Activated CD4-positive, alpha-beta memory T cell treated with anti-CD3 and anti-CD28 coated beads for 36 hours (primary cell): ENCODE measurements at regions of chr7 and their contacts with region 1.

Region 1: GRCh38 chr7:27160546-27161213 is 4.2 kb upstream of the HOXA7 start:
- DNase-seq: peak; percentile 87
- H3K4me3 Mint-ChIP-seq: peak overlapping the region; percentile 61
- H3K27ac Mint-ChIP-seq: no peak overlapping the region
- H3K4me1 Mint-ChIP-seq: peaks cover 28% of the 10 kb centered on the region
- H3K27me3 Mint-ChIP-seq: peaks cover 81% of the 10 kb centered on the region

Region 2: GRCh38 chr7:25862260-25863037 is 1298.2 kb before region 1 on chr7:
- CTCF ChIA-PET with region 1: no interaction called
- POLR2A ChIA-PET with region 1: no interaction called
- intact Hi-C with region 1: loop called (anchors 5 kb)
- DNase-seq: peak; percentile 98
- H3K4me3 Mint-ChIP-seq: peak overlapping the region; percentile 65
- H3K27ac Mint-ChIP-seq: peak overlapping the region; percentile 60
- H3K4me1 Mint-ChIP-seq: peaks cover 22% of the 10 kb centered on the region
- H3K27me3 Mint-ChIP-seq: peaks cover 69% of the 10 kb centered on the region

Region 3: GRCh38 chr7:26376175-26376917 is 784.3 kb before region 1 on chr7:
- CTCF ChIA-PET with region 1: interaction called, 12 read pairs
- POLR2A ChIA-PET with region 1: no interaction called
- intact Hi-C with region 1: no loop called
- DNase-seq: peak; percentile 56
- H3K4me3 Mint-ChIP-seq: peak overlapping the region; percentile 73
- H3K27ac Mint-ChIP-seq: no peak overlapping the region
- H3K4me1 Mint-ChIP-seq: no peaks in the 10 kb centered on the region
- H3K27me3 Mint-ChIP-seq: peaks cover 27% of the 10 kb centered on the region

Region 4: DNA sequence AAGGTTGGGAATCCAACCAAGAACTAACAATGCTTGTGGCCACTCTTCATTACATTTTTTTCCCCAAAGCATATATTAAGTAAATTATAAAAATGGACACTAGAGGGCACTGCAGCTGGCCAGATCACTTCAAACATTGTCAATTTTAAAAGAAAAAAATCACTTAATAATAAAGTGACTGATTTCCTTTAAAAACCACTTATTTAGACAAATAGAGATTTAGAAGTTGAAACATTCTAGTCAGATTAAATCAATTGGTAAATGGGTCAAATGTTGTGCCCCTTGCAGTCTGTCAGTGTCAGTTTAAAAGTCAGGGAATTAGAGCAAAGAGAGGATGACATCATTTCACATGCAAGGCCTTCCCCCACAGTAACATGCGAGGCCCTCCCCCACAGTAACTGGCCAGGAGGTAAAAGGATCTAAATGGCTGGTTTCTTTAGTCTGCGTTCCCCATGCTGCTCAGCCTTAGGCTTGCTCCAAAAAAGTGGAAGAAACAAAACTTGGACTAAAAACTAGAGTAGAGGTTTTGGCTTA is 474.2 kb before region 1 on chr7:
- CTCF ChIA-PET with region 1: interaction called, 4 read pairs
- POLR2A ChIA-PET with region 1: no interaction called
- intact Hi-C with region 1: loop called (anchors 1 kb)
- DNase-seq: no peak
- H3K4me3 Mint-ChIP-seq: no peak overlapping the region
- H3K27ac Mint-ChIP-seq: no peak overlapping the region
- H3K4me1 Mint-ChIP-seq: no peaks in the 10 kb centered on the region
- H3K27me3 Mint-ChIP-seq: peaks cover 13% of the 10 kb centered on the region

Region 5: GRCh38 chr7:27095897-27096767 is 64.5 kb before region 1 on chr7 and contains the start of gene HOXA1:
- CTCF ChIA-PET with region 1: interaction called, 10 read pairs
- POLR2A ChIA-PET with region 1: no interaction called
- intact Hi-C with region 1: loop called (anchors 5 kb)
- DNase-seq: peak; percentile 85
- H3K4me3 Mint-ChIP-seq: peak within 1 kb of the TSS; percentile 66
- H3K27ac Mint-ChIP-seq: no peak within 1 kb of the TSS
- H3K4me1 Mint-ChIP-seq: peaks cover 15% of the 10 kb centered on the region
- H3K27me3 Mint-ChIP-seq: peaks cover 62% of the 10 kb centered on the region
- total RNA-seq, gene HOXA1: 0.29 to 0.43 TPM

Region 6: GRCh38 chr7:27179503-27180430 is 19.1 kb after region 1 on chr7:
- CTCF ChIA-PET with region 1: interaction called, 22 read pairs
- POLR2A ChIA-PET with region 1: no interaction called
- intact Hi-C with region 1: no loop called
- DNase-seq: peak; percentile 68
- H3K4me3 Mint-ChIP-seq: no peak overlapping the region
- H3K27ac Mint-ChIP-seq: no peak overlapping the region
- H3K4me1 Mint-ChIP-seq: peaks cover 13% of the 10 kb centered on the region
- H3K27me3 Mint-ChIP-seq: peaks cover 69% of the 10 kb centered on the region